PC-3 (cell line): ENCODE measurements at regions of chr3 and their contacts with region 1.

Region 1: GRCh38 chr3:16671690-16672089 is 66.5 kb upstream of the DAZL start:
- DNase-seq: no peak
- ATAC-seq: no peak
- H3K4me3 ChIP-seq: no peak overlapping the region
- H3K27ac ChIP-seq: no peak overlapping the region
- H3K4me1 ChIP-seq: no peaks in the 10 kb centered on the region
- H3K27me3 ChIP-seq: no peaks in the 10 kb centered on the region
- CTCF ChIP-seq: no peak

Region 2: DNA sequence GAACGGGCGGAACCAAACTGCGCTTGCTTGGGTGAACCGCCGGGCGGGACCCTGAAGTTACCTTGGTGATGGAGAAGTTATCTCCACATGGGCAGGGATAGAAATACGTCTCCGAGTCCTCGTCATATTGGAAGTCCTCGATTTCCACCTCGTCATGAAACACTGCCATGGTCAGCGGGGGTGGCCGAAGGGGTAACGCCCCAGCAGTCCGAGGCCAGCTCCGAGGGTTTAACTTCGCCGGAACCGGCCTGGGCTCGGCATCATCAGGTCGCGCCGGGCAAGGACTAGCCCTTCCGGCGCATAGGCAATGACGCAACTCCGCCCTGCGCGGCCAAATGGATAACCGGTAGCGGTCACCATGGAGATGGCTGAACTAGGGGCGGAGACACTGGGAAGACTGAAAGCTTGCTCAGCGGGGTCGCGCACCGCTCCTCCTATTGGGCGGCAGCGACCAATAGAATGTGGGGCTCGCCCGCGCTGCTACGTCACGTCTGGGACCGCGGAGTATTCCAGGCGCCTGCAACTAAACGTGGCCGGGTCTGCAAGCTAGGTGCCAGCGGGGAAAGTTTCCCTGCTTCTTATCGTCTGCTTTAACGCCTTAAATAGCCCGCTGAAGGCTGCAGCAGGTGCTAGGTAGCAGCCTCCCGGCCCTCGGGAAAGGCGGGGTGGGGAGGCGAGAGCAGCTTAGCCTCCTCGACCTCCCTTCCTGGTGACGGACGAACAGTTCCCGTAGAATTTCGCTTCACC is 406.8 kb before region 1 on chr3 and contains the starts of genes DPH3 and OXNAD1:
- CTCF ChIA-PET with region 1: no interaction called
- POLR2A ChIA-PET with region 1: no interaction called
- intact Hi-C with region 1: no loop called
- DNase-seq: peak; percentile 100
- ATAC-seq: peak; percentile 97
- H3K4me3 ChIP-seq: peak within 1 kb of the TSS; percentile 80
- H3K27ac ChIP-seq: peak within 1 kb of the TSS; percentile 42
- H3K4me1 ChIP-seq: peaks cover 26% of the 10 kb centered on the region
- H3K27me3 ChIP-seq: no peaks in the 10 kb centered on the region
- CTCF ChIP-seq: no peak
- total RNA-seq, gene DPH3: 8.1 and 10.2 TPM in 2 replicates
- total RNA-seq, gene OXNAD1: 17.6 and 20.5 TPM in 2 replicates

Region 3: GRCh38 chr3:16448639-16449070 is 223.0 kb before region 1 on chr3:
- CTCF ChIA-PET with region 1: no interaction called
- POLR2A ChIA-PET with region 1: interaction called, 17 read pairs
- intact Hi-C with region 1: no loop called
- DNase-seq: peak; percentile 95
- ATAC-seq: peak; percentile 94
- H3K4me3 ChIP-seq: no peak overlapping the region
- H3K27ac ChIP-seq: peak overlapping the region; percentile 40
- H3K4me1 ChIP-seq: peaks cover 28% of the 10 kb centered on the region
- H3K27me3 ChIP-seq: no peaks in the 10 kb centered on the region
- CTCF ChIP-seq: no peak

Region 4: GRCh38 chr3:16741103-16741758 is 69.5 kb after region 1 on chr3:
- CTCF ChIA-PET with region 1: no interaction called
- POLR2A ChIA-PET with region 1: no interaction called
- intact Hi-C with region 1: no loop called
- DNase-seq: peak; percentile 91
- ATAC-seq: peak; percentile 89
- H3K4me3 ChIP-seq: no peak overlapping the region
- H3K27ac ChIP-seq: peak overlapping the region; percentile 54
- H3K4me1 ChIP-seq: peaks cover 17% of the 10 kb centered on the region
- H3K27me3 ChIP-seq: no peaks in the 10 kb centered on the region
- CTCF ChIP-seq: no peak

Region 5: DNA sequence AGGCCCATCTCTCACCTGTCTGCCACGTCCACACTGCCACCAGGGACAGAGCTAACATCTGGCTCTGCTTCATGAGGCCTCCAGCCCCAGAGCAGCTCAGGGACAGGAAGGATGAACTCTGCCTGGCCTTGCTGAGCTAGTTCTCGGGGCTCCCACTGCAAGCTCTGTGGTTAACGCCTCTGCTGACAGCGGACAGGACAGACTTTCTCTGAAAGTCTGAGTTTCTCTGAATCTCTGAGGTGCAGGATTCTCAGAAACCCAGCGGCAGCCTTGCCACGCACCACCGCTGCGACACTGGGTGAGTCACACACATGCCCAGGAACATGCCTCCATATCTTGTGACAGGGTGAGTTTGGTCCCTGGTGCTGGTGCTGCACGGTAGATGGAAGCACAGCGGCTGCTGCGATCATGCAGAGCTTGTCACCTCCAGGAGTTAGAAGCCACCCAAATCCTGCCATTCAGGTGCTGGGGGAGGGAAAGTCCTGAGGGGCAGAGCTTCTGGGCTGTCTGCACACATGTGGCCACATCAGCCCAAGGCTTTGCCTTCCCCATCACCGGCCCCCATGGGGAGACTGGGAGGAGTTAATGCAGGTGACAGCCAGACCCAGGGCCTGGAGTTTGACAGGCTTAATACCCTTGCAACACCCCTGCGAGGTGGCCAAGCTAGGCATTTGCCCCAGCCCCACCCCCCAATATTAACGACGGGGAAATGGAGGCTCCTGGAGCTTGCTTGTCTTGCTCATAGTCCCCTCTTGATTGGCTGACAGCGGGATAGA is 480.1 kb after region 1 on chr3:
- CTCF ChIA-PET with region 1: no interaction called
- POLR2A ChIA-PET with region 1: no interaction called
- intact Hi-C with region 1: no loop called
- DNase-seq: no peak
- ATAC-seq: no peak; the same call in 1 of the 2 replicates
- H3K4me3 ChIP-seq: no peak overlapping the region
- H3K27ac ChIP-seq: no peak overlapping the region
- H3K4me1 ChIP-seq: no peaks in the 10 kb centered on the region
- H3K27me3 ChIP-seq: no peaks in the 10 kb centered on the region
- CTCF ChIP-seq: no peak